ENCODE measurements at regions of chr15 and their contacts with region 1.

Region 1: DNA sequence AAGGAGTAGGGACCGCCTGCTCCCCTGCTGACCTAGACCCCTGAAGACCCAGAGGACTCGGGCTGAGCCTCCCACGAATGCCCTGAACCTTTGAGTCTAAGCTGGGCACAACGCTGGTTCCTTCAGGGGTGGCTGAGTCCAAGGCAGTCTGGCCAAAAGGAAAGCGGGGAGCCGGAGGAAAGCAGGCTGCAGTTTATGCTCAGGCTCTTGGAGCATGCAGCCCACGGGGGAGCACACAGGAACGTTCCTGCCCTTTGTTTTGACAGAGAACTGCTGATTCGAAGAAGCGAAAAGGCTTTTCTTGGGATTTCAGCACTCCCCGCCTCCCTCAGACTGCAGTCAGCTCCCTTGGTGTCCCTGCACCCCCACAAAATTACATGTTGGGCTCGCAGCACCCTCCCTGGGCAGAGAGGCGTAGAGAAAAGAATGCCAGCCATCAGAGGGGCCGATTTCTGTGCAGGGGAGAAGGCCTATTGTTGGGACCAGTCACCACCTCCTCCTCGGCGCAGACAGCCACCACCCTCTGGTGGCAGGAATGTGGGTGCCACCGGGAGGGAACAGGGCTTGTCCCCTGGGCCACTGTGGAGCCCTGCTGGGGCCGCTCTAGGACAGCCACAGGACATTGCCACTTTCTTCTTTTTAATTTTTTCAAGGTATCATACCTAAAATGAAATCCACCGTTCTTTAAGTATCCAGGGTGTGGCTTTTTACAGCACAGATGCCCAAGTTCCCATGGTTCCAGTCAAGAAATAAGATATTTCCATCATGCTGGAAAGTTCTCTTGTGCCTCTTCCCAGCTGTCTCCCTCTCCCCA is 72.2 kb downstream of the SMAD6 start:
- DNase-seq: no peak
- H3K4me3 ChIP-seq: no peak overlapping the region
- H3K27ac ChIP-seq: peak overlapping the region; percentile 1 to 66 (median 56)
- H3K4me1 ChIP-seq: peaks cover 0 to 34% (median 17%) of the 10 kb centered on the region in 3 donors
- H3K27me3 ChIP-seq: no peaks in the 10 kb centered on the region
- CTCF ChIP-seq: peak; percentile 77 to 97 (median 96)
- POLR2A ChIP-seq: no peak

Region 2: DNA sequence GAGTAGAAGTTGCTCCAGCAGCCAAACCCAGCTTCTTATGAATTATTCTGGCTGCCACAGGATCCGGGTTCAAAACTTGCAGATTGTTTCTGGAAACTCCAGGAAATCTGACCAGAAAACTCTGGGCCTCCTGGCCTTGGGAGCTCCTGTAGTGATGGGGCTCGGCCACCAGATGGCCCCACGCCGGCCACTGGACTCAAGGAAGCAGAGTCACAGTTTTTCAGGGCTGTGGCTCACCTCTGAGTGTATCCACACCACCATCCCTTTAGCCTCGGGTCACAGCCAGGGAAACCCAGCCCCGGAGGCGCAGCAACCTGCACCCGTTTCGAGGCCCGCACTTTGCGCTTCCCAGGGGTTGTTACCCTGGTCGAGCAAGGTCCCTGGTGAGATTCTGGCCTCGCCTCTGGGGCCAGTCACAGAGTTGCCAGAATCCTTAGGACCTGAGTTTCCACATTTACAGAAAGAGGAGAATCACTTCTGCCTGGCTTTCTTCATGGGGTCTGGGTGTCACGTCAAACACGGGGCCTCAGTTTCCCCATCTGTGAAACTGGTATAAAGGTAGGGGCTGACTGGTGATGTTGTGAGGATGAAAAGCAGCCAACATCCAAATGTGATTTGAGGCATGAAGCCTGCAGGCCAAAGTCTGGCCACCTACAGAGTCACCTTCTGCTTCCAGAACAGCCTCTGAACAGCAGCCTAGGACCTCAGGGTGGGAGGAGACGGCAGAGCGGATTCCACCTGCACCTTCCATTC is 154.9 kb before region 1 on chr15:
- intact Hi-C with region 1: loop called (anchors 5 kb)
- DNase-seq: no peak
- H3K4me3 ChIP-seq: no peak overlapping the region
- H3K27ac ChIP-seq: peak overlapping the region in 2 of 4 donors; percentile 63 to 74
- H3K4me1 ChIP-seq: peaks cover 10 to 68% (median 38%) of the 10 kb centered on the region in 3 donors
- H3K27me3 ChIP-seq: peaks cover 0 to 32% (median 0%) of the 10 kb centered on the region in 4 donors
- CTCF ChIP-seq: peak; percentile 62 to 88 (median 84)
- POLR2A ChIP-seq: no peak

Region 3: DNA sequence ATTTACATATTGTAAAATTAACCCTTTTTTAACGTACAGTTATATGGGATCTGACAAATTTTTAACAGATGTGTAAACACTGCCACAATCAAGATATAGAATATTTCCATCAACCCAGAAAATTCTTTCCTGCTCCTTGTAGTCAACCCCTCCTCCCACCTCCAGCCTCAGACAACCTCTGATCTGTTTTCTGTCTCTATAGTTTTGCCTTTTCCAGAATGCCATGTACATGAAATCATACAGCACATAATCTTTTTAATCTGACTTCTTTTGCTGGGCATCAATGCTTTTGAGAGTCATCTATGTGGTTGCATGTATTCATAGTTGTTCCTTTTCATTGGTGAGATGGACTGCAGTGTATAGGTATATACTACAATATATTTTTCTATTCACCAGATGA is 80.8 kb after region 1 on chr15:
- intact Hi-C with region 1: no loop called
- DNase-seq: no peak
- H3K4me3 ChIP-seq: no peak overlapping the region
- H3K27ac ChIP-seq: no peak overlapping the region
- H3K4me1 ChIP-seq: peaks cover 10 to 16% (median 15%) of the 10 kb centered on the region in 3 donors
- H3K27me3 ChIP-seq: peaks cover 0 to 19% (median 0%) of the 10 kb centered on the region in 4 donors
- CTCF ChIP-seq: no peak
- POLR2A ChIP-seq: no peak

Measured in esophagus squamous epithelium (tissue), 5 donors.